ENCODE measurements at regions of chr5 and their contacts with region 1.

Region 1: GRCh38 chr5:181207214-181208107 is 2.5 kb upstream of the TRIM7 start:
- DNase-seq: peak; percentile 87 to 88
- H3K4me3 ChIP-seq: peak overlapping the region; percentile 50
- H3K4me3 Mint-ChIP-seq: peak overlapping the region; percentile 82
- H3K27ac Mint-ChIP-seq: peak overlapping the region; percentile 91
- H3K4me1 ChIP-seq: no peaks in the 10 kb centered on the region
- H3K4me1 Mint-ChIP-seq: peaks cover 28% of the 10 kb centered on the region
- H3K27me3 ChIP-seq: no peaks in the 10 kb centered on the region
- H3K27me3 Mint-ChIP-seq: peaks cover 15% of the 10 kb centered on the region
- CTCF ChIP-seq: no peak

Region 2: DNA sequence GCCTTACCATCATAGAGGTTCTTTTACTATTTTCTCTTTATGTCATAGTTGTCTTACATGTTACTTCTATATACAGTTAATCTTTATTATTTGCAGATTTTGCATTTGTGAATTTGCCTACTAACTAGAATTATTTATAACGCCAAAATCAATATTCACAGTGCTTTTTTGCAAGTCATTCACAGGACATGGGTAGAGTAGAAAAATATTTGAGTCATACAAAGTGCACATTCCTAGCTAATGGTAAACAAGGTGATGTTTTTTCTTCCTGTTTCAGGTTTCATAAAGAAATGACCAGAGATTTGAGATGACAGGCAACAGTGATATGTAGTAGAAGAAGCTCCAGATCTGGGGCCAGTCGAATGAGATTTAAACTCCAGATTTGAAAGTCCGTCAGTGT is 437.6 kb before region 1 on chr5:
- CTCF ChIA-PET with region 1: no interaction called
- POLR2A ChIA-PET with region 1: no interaction called
- intact Hi-C with region 1: no loop called
- DNase-seq: no peak
- H3K4me3 ChIP-seq: no peak overlapping the region
- H3K4me3 Mint-ChIP-seq: no peak overlapping the region
- H3K27ac Mint-ChIP-seq: no peak overlapping the region
- H3K4me1 ChIP-seq: no peaks in the 10 kb centered on the region
- H3K4me1 Mint-ChIP-seq: no peaks in the 10 kb centered on the region
- H3K27me3 ChIP-seq: no peaks in the 10 kb centered on the region
- H3K27me3 Mint-ChIP-seq: peaks cover 5% of the 10 kb centered on the region
- CTCF ChIP-seq: no peak

Region 3: DNA sequence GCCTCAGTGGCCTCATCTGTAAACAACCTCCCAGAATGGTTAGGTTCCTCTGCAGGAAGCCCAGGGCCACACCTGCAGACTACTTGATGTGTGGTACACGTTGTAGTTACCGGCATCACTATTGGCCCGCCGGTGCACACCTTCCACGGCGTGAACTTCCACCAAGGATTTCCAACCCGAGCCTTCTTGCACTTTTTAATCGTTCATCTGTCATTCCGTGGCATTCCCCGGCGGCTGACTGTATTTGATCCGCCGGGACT is 10.3 kb after region 1 on chr5:
- CTCF ChIA-PET with region 1: interaction called, 3 read pairs
- POLR2A ChIA-PET with region 1: no interaction called
- intact Hi-C with region 1: loop called (anchors 1 kb)
- DNase-seq: peak; percentile 58 to 69
- H3K4me3 ChIP-seq: peak overlapping the region; percentile 61
- H3K4me3 Mint-ChIP-seq: peak overlapping the region; percentile 85
- H3K27ac Mint-ChIP-seq: peak overlapping the region; percentile 59
- H3K4me1 ChIP-seq: 0 out of 2 replicates have a peak, but pooled peaks cover 4% of the 10 kb centered on the region
- H3K4me1 Mint-ChIP-seq: peaks cover 33% of the 10 kb centered on the region
- H3K27me3 ChIP-seq: no peaks in the 10 kb centered on the region
- H3K27me3 Mint-ChIP-seq: peaks cover 13% of the 10 kb centered on the region
- CTCF ChIP-seq: no peak